ENCODE measurements at regions of chr18 and their contacts with region 1.

Region 1: GRCh38 chr18:46497129-46497528 is 159.9 kb downstream of the LOXHD1 start:
- DNase-seq: peak; percentile 60
- H3K4me3 Mint-ChIP-seq: no peak overlapping the region
- H3K27ac Mint-ChIP-seq: no peak overlapping the region
- H3K4me1 Mint-ChIP-seq: no peaks in the 10 kb centered on the region
- H3K27me3 Mint-ChIP-seq: peaks cover 36% of the 10 kb centered on the region
- CTCF ChIP-seq: no peak

Region 2: DNA sequence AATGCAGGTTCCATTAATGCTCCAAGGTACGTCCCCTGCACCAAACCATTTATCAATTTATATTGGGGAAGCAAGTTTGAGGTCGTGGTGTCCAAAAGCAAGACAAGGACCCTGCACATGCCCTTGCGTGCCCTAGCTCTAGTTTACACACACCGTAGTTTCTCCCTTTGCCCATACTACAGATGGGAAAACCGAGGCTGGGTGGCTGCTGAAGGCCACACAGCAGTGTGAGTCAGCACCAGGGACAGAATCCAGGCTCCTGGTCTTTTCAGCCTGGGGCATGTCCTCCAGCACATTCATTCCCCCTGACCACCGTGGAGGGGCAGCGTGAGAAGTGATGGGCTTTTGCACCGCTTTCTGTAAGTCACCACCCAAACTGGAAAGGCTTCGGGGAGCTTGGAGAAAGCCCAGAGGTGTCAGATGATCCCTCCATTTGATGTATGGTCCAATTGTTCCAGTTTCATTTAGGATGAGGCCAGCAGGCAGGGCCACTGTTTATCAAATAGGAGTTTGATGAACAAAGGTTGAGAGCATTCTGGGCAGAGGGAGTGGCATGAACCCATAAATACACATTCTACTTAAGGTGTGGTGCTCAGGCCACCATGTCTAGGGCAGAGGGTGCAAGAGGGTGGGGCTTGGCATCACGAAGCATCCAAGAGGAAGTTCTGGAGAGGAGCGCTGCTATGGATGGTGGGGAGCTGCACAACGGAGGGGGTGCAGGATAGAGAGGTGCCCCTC is 118.8 kb before region 1 on chr18:
- CTCF ChIA-PET with region 1: no interaction called
- POLR2A ChIA-PET with region 1: no interaction called
- intact Hi-C with region 1: no loop called
- DNase-seq: no peak
- H3K4me3 Mint-ChIP-seq: no peak overlapping the region
- H3K27ac Mint-ChIP-seq: no peak overlapping the region
- H3K4me1 Mint-ChIP-seq: no peaks in the 10 kb centered on the region
- H3K27me3 Mint-ChIP-seq: no peaks in the 10 kb centered on the region
- CTCF ChIP-seq: no peak

Region 3: GRCh38 chr18:46542545-46542944 is 45.4 kb after region 1 on chr18:
- CTCF ChIA-PET with region 1: no interaction called
- POLR2A ChIA-PET with region 1: no interaction called
- intact Hi-C with region 1: loop called (anchors 1 kb)
- DNase-seq: peak; percentile 59
- H3K4me3 Mint-ChIP-seq: no peak overlapping the region
- H3K27ac Mint-ChIP-seq: no peak overlapping the region
- H3K4me1 Mint-ChIP-seq: no peaks in the 10 kb centered on the region
- H3K27me3 Mint-ChIP-seq: peaks cover 19% of the 10 kb centered on the region
- CTCF ChIP-seq: no peak